Posterior vena cava (tissue), 2 donors: ENCODE measurements at regions of chr9 and their contacts with region 1.

Region 1: DNA sequence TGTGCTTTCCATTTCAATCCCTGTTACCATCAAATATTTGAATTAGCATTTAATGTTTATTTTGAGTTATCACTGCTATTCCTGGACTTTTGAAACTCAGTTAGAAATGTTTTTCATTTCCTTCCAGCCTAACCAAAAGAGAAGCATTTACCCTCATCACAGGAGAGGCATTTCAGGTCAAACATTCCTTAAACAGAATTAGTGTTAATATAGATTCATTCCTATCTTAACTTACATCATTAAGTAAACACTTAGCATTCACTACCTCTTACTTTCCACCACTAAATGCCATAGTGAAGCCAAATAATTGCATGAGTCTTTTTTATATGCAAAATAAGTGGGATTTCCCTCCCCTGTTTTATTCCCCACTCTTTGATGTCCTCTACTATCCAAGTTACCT is 136.5 kb upstream of the OR13F1 start:
- DNase-seq: no peak

Region 2: DNA sequence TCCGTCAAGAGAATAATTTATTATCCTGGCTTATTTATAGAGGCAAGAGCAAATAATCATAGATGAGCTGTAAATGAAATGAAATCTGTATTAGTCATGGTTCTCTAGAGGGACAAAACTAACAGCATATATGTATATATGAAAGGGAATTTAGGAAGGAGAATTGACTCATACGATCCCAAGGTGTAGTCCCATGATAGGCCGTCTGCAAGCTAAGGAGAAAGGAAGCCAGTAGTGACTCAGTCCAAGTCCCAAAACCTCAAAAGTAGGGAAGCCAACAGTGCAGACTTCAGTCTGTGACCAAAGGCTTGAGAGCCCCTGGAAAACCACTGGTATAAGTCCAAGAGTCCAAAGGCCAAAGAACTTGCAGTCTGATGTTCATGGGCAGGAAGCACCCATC is 1888.3 kb before region 1 on chr9:
- intact Hi-C with region 1: no loop called
- DNase-seq: no peak

Region 3: DNA sequence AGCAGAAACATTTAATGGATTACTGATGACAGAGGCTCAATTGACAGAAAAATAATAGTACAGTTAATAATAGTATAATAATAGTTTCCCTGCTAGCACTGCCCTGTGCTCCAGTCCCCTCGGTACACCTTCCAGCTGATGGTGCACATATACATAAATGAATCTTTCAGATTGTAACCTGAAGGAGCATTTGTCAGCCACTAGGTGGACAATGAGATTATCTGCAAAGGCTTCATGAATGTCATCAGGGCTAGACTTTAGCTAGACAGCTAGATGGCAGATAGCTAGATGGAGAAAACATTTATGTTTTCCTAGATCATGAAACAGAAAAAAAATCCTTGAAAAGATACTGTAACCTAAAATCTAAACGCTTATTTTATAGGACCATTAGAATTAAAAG is 577.8 kb before region 1 on chr9:
- intact Hi-C with region 1: loop called in 1 of 2 experiments (anchors 5 kb)
- DNase-seq: no peak